ENCODE measurements at regions of chr6 and their contacts with region 1.

Region 1: GRCh38 chr6:39041072-39041471 is 7.5 kb upstream of the GLP1R start:
- DNase-seq: no peak

Region 2: DNA sequence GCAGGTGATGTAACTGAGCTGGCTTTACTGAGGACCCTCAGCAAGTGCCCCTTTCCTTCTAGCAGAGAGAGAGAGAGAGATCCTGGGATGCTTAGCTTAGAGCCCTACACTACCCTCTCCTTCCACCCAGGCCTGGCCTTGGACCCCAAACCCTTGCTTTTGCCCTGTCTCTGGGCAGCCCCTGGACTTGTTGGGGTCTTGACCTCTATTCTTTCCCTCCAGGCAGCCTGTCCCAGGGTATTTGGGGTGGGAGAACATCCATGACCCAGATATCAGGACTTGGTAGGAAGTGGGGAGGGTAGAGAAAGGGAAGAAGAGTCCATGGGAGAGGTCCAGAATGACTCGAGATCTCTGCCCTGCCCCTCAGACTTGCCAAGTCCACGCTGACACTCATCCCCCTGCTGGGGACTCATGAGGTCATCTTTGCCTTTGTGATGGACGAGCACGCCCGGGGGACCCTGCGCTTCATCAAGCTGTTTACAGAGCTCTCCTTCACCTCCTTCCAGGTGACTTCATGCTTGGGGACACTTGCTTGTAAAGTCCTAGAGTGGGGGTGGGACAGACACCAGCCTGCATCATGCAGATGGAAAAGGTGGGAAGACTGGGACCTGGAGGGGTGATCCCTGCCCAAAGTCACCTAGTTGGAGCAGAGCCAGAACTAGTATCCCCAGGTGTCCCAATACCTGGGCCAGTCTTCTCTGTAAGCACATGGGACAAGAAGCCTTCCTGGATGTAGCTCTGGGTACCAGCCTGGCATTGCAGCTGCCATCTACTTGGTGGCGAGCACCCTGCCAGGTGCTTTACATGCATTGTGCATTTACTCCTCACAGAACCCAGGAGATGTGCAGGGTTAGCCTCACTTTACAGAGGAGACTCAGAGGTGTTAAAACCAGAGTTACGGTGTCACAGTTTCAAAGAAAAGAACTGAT is 38.4 kb after region 1 on chr6:
- intact Hi-C with region 1: loop called in 1 of 2 experiments (anchors 1 kb)
- DNase-seq: no peak

Measured in posterior vena cava (tissue), 2 donors.